Motor neuron (in vitro differentiated cells): ENCODE measurements at regions of chr5 and their contacts with region 1.

Region 1: DNA sequence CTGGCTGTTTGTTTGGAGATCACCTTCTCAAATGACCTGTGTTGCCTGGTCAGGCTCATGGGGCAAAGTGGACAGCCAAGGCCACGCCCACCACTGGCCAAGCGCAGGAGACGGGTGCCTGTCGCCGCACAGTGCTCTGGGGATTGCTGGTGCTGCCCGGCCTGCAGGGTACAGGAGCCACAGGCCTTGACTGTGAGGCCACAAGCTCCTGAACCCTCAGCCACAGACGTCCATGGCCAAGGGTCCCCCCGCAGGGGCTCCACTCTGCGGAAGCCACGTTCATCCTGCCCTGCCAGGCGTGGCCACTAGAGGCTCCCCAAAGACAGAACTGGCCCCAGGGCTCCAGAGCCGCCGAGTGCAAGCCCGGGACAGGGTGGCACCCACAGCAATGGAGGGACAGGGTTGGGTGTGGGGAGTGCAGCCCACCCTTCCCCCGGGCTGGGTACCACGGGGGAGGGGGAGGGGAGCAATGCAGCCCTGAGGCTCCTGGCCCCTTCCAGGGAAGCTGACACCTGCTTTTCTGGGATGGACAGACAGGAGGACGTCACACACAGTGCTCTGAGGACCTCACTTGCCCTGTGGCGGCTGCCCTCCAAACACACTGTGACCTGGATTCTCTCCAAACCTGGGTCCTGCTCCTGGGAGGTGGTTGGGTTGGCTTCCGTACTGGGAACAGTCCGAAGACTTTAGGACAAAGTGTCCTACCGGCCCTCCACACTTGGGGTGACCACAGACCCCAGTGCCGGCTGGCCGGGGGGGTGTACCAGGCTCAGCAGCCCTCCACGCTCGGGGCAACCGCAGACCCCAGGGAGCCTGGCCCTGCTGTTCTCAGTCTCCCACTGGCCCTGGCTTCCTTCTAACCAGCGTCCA is 21.5 kb downstream of the TPPP start:
- ATAC-seq: peak; percentile 60 to 81 (median 70)
- H3K4me3 ChIP-seq: no peak overlapping the region
- H3K27ac ChIP-seq: peak overlapping the region in 1 of 2 donors; percentile 58
- H3K4me1 ChIP-seq: peaks cover 16 to 32% of the 10 kb centered on the region in 2 donors

Region 2: GRCh38 chr5:611721-612486 is 59.8 kb before region 1 on chr5 and contains the start of gene CEP72:
- in situ Hi-C with region 1: no loop called
- ATAC-seq: peak; percentile 83 to 90 (median 87)
- H3K4me3 ChIP-seq: peak within 1 kb of the TSS; percentile 67 to 99 (median 80)
- H3K27ac ChIP-seq: peak within 1 kb of the TSS in 1 of 2 donors; percentile 36
- H3K4me1 ChIP-seq: peaks cover 4 to 6% of the 10 kb centered on the region in 2 donors
- total RNA-seq, gene CEP72: 0.71 to 18.0 (median 2.1) TPM

Region 3: GRCh38 chr5:892394-893136 is 220.9 kb after region 1 on chr5 and contains the starts of genes BRD9 and TRIP13:
- in situ Hi-C with region 1: loop called in 2 of 9 experiments (anchors 25 kb)
- ATAC-seq: peak; percentile 93 to 96 (median 94)
- H3K4me3 ChIP-seq: peak within 1 kb of the TSS; percentile 57 to 92 (median 76)
- H3K27ac ChIP-seq: peak within 1 kb of the TSS; percentile 94 to 95
- H3K4me1 ChIP-seq: peaks cover 13 to 14% of the 10 kb centered on the region in 2 donors
- total RNA-seq, gene BRD9: 20.4 to 50.1 (median 36.8) TPM
- total RNA-seq, gene TRIP13: 0.51 to 24.0 (median 2.1) TPM

Region 4: DNA sequence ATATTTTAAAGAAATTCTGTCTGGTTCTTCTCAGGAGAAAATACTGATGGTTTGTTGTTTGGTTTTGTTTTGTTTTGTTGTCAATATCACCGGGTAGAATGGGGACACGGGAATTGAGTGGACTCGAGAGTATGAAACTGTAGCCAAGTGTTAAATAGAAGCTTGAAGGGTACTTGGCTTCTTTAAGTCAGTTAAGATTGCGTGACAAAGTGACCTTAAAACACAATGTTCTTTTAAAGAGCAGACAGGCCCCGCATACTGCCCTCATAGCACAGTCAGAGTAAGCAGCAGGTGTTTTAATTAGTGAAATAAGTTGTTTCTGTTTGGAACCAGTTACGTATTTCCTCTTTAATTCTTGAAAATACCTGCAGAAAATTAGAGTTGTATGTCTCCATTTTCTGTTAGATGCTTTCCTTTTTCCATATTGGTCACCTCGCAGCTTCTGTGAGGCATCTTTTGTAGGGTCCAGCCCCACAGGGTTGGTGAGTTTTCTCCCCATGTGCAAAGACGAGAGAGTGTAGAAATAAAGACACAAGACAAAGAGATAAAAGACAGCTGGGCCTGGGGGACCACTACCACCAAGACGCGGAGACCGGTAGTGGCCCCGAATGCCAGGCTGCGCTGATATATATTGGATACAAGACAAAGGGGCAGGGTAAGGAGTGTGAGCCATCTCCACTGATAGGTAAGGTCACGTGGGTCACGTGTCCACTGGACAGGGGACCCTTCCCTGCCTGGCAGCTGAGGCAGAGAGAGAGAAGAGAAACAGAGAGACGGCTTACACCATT is 230.6 kb after region 1 on chr5:
- in situ Hi-C with region 1: loop called in 3 of 9 experiments (anchors 10 to 25 kb)
- ATAC-seq: no peak
- H3K4me3 ChIP-seq: no peak overlapping the region
- H3K27ac ChIP-seq: no peak overlapping the region
- H3K4me1 ChIP-seq: peaks cover 0 to 3% of the 10 kb centered on the region in 2 donors